Endothelial cell of umbilical vein (primary cell): ENCODE measurements at regions of chr14 and their contacts with region 1.

Region 1: GRCh38 chr14:64636208-64636979 is 67.8 kb upstream of the PLEKHG3 start:
- DNase-seq: peak; percentile 65
- H3K4me3 ChIP-seq: no peak overlapping the region
- H3K27ac ChIP-seq: no peak overlapping the region
- H3K4me1 ChIP-seq: no peaks in the 10 kb centered on the region
- H3K27me3 ChIP-seq: no peaks in the 10 kb centered on the region
- CTCF ChIP-seq: peak; percentile 81 to 86
- POLR2A ChIP-seq: no peak

Region 2: DNA sequence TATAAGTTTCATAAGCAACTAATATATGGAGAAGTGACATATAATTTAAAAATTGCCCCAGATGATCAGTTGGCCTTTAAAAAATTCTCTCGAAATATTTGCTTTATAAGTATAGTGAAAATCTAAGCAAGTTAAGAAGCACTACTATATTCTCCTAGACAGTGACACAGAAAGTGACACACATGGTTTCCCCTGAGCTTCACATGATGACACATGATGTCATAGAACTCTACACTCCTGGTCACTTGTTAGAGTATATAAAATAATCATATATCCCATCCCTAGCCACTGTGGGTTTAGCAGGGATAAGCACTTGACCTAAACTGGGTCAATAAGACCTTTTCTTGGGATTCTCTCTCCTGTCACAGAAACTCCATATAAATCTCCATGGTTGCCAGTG is 290.9 kb before region 1 on chr14:
- CTCF ChIA-PET with region 1: interaction called, 57 read pairs
- POLR2A ChIA-PET with region 1: no interaction called
- dilution Hi-C with region 1: no loop called
- intact Hi-C with region 1: loop called (anchors 1 kb)
- DNase-seq: no peak
- H3K4me3 ChIP-seq: no peak overlapping the region
- H3K27ac ChIP-seq: no peak overlapping the region
- H3K4me1 ChIP-seq: no peaks in the 10 kb centered on the region
- H3K27me3 ChIP-seq: no peaks in the 10 kb centered on the region
- CTCF ChIP-seq: no peak
- POLR2A ChIP-seq: no peak

Region 3: DNA sequence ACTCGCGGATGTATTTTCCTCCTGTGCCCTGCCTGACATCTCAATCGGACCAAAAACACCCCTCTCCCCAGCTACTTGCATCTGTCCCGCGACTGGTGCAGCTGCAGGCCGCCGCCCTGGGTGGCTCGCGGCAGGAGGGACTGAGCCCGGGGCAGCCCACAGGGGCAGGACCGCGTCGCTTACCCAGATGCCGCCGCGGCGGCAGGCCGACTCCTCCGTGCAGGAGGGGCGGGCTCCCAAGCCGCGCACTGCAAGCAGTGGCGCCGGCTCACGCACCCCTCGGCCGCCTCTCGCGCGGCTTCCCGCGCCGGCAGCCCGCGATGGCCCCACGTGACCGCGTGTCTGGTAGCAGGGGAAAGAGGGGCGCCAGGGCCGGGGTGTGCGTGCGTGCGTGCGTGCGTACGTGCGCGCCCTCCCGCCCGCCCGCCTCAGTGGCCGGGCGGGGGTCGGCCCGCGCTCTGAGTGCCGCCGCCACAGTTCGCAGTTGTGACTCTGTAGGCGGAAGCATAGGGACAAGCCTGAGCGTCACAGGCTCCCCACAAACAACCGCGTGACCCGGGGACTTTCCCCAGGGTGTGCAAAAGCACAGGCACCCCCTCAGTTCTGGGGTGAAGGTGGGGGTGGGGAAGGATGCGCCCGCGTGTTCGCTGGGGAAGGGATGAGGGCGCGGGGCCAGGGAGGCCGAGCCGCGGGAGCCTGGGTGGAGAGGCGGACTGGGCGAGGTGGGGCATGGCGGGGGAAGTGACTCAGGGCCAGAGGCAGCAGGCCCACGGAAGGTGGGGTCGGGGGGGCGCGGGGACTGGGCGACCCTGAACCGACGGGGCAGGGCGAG is 132.7 kb before region 1 on chr14 and contains the start of gene ZBTB25:
- CTCF ChIA-PET with region 1: no interaction called
- POLR2A ChIA-PET with region 1: no interaction called
- dilution Hi-C with region 1: no loop called
- intact Hi-C with region 1: loop called (anchors 2 kb)
- DNase-seq: peak; percentile 95
- H3K4me3 ChIP-seq: peak within 1 kb of the TSS; percentile 71 to 97 (median 93)
- H3K27ac ChIP-seq: peak within 1 kb of the TSS; percentile 95
- H3K4me1 ChIP-seq: peaks cover 38% of the 10 kb centered on the region
- H3K27me3 ChIP-seq: no peaks in the 10 kb centered on the region
- CTCF ChIP-seq: no peak
- POLR2A ChIP-seq: peak; percentile 84
- total RNA-seq, gene ZBTB25: 6.4 and 7.7 TPM in 2 replicates

Region 4: DNA sequence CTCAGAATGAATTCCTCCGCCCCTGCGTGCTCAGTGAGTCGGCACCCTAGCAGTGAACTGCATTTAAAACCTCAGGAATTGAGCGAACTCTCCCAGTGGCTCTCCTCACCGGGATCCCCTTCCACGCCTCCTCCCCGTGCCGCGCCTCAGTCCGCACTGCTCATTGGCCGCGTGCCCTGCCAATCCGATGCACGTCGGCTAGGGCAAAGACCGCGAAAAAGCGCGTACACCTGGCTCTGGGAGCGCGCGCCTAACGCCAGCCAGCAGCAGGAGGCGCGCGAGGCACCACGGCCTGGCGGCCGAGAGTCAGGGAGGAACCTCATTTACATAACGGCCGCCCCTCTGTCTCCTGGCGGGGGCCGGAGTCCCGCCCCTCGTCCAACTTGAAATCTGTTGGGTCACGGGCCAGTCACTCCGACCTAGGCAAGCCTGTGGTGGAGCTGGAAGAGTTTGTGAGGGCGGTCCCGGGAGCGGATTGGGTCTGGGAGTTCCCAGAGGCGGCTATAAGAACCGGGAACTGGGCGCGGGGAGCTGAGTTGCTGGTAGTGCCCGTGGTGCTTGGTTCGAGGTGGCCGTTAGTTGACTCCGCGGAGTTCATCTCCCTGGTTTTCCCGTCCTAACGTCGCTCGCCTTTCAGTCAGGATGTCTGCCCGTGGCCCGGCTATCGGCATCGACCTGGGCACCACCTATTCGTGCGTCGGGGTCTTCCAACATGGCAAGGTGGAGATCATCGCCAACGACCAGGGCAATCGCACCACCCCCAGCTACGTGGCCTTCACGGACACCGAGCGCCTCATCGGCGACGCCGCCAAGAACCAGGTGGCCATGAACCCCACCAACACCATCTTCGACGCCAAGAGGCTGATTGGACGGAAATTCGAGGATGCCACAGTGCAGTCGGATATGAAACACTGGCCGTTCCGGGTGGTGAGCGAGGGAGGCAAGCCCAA is 95.9 kb before region 1 on chr14 and contains the start of gene HSPA2:
- CTCF ChIA-PET with region 1: interaction called, 64 read pairs
- POLR2A ChIA-PET with region 1: interaction called, 6 read pairs
- dilution Hi-C with region 1: no loop called
- intact Hi-C with region 1: loop called (anchors 1 kb)
- DNase-seq: peak; percentile 100
- H3K4me3 ChIP-seq: peak within 1 kb of the TSS; percentile 50 to 68 (median 64)
- H3K27ac ChIP-seq: peak within 1 kb of the TSS; percentile 38
- H3K4me1 ChIP-seq: peaks cover 25% of the 10 kb centered on the region
- H3K27me3 ChIP-seq: peaks cover 26 to 29% of the 10 kb centered on the region in 2 experiments
- CTCF ChIP-seq: peak; percentile 86 to 95
- POLR2A ChIP-seq: peak; percentile 74
- total RNA-seq, gene HSPA2: 8.2 and 11.4 TPM in 2 replicates

Region 5: DNA sequence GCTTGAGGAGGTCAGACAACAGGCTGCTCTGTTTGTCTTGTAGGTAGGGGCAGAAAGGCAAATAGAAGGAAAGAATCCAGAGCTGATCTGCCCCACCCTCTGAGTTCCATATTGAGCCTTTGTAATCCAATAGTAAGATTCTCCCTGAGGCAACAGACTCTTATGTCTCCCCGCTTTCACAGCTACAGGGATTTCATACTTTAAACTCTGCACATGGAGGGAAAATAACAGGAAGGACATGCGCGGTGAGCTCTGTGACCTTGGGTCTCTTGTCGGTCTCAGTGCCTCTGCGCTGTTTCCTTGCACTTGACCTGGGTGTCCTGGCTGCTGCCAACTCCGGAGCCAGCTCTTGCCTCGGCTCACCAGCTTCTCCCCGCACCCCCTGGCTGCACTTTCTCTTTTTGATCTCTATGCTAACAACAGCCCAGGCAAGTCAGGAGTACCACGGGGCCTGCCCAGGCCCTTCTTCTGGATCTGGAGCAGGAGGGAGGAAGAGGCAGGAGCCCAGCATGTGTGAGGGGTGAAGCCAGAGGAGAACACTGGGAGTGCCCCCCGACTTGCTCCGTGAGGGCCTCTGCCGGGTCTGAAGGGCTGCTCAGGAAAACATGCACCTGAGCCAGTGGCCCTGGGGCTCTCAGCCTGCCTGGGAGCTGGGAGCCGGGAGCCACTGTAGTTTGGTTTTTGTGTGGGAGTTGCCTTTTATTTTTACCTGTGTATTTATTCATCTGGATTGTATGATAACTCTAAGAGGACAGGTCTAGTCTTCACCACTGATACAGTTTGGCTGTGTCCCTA is 10.7 kb before region 1 on chr14:
- CTCF ChIA-PET with region 1: interaction called, 14 read pairs
- POLR2A ChIA-PET with region 1: interaction called, 4 read pairs
- dilution Hi-C with region 1: no loop called
- intact Hi-C with region 1: no loop called
- DNase-seq: peak; percentile 48
- H3K4me3 ChIP-seq: no peak overlapping the region
- H3K27ac ChIP-seq: no peak overlapping the region
- H3K4me1 ChIP-seq: no peaks in the 10 kb centered on the region
- H3K27me3 ChIP-seq: peaks cover 0 to 2% of the 10 kb centered on the region in 2 experiments
- CTCF ChIP-seq: no peak
- POLR2A ChIP-seq: no peak